PC-9 (cell line): ENCODE measurements at regions of chr9 and their contacts with region 1.

Region 1: DNA sequence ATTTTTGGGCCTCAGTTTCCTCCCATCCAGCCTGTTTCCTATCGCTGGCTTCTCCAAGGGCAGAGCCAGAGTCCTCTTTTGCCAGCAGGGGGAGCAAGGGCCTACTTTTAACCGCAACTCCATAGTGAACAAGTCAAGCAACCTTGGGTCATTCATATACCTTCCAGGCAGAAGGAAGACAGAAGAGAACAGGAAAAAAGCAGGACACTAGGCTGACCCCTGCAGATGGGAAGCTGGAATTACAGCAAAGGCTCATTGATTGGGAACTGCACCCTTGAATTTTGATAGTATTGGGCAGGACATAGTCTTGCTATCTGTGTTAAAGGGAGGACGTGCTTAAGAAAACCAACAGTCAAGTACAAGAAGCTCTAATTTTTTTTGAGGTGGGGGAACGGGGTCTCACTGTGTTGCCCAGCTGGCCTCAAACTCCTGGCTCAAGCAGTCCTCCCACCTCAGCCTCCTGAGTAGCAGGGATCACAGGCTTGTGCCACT is 30.1 kb downstream of the QRFP start:
- DNase-seq: peak; percentile 85 to 86
- H3K4me3 ChIP-seq: no peak overlapping the region
- H3K27ac ChIP-seq: no peak overlapping the region
- H3K4me1 ChIP-seq: no peaks in the 10 kb centered on the region
- H3K27me3 ChIP-seq: no peaks in the 10 kb centered on the region
- CTCF ChIP-seq: peak; percentile 96

Region 2: DNA sequence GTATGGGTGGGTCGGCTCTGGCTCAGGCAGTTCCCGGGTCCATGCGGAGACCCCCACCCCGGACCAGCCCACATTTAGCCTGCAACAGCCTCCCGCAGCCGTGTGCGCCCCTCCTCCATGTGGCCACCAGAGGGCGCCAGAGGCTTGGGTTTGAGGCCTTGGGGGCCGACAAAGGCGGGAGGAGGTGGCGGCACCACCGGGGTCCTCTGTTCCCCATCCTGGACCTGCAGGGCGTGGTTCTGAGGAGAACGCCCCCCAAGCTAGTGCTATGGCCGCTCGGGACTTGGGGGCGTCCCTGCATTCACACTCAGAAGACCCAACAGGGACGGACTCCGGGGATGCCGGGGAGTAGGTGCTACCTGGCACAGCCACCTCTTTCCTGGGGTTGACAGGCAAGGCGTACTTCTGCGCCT is 405.3 kb before region 1 on chr9:
- CTCF ChIA-PET with region 1: no interaction called
- POLR2A ChIA-PET with region 1: no interaction called
- intact Hi-C with region 1: loop called (anchors 5 kb)
- DNase-seq: peak in 1 of 2 experiments; percentile 55
- H3K4me3 ChIP-seq: no peak overlapping the region
- H3K27ac ChIP-seq: no peak overlapping the region
- H3K4me1 ChIP-seq: no peaks in the 10 kb centered on the region
- H3K27me3 ChIP-seq: no peaks in the 10 kb centered on the region
- CTCF ChIP-seq: peak; percentile 93

Region 3: DNA sequence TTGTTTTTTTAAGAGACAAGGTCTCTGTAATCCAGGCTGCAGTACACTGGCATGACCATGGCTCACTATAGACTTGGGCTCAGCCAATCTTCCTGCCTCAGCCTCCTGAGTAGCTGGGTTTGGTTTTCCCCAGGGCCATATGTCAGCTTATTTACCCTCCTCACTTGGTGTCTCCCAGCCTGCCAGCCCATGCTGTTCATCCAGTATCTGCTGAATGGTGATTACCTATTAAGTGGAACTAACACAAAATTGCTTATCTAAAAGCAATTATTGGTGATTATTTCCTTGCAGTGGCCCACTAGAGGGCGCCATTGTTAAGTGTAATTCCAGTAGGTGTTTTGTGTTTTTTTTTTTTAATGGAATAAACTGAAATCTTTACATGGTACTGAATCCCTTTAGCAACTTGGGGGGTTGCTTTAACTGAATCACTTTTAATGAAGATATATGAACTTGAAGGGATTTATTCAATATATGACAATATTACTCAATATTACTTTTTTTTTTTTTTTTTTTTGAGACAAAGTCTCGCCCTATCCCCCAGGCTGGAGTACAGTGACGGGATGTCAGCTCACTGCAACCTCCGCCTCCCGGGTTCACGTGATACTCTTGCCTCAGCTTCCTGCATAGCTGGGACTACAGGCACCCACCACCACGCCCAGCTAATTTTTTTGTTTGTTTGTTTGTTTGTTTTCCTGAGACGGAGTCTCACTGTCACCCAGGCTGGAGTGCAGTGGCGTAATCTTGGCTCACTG is 159.1 kb before region 1 on chr9:
- CTCF ChIA-PET with region 1: interaction called, 10 read pairs
- POLR2A ChIA-PET with region 1: no interaction called
- intact Hi-C with region 1: loop called (anchors 1 kb)
- DNase-seq: peak; percentile 59 to 61
- H3K4me3 ChIP-seq: no peak overlapping the region
- H3K27ac ChIP-seq: no peak overlapping the region
- H3K4me1 ChIP-seq: no peaks in the 10 kb centered on the region
- H3K27me3 ChIP-seq: no peaks in the 10 kb centered on the region
- CTCF ChIP-seq: peak; percentile 94

Region 4: DNA sequence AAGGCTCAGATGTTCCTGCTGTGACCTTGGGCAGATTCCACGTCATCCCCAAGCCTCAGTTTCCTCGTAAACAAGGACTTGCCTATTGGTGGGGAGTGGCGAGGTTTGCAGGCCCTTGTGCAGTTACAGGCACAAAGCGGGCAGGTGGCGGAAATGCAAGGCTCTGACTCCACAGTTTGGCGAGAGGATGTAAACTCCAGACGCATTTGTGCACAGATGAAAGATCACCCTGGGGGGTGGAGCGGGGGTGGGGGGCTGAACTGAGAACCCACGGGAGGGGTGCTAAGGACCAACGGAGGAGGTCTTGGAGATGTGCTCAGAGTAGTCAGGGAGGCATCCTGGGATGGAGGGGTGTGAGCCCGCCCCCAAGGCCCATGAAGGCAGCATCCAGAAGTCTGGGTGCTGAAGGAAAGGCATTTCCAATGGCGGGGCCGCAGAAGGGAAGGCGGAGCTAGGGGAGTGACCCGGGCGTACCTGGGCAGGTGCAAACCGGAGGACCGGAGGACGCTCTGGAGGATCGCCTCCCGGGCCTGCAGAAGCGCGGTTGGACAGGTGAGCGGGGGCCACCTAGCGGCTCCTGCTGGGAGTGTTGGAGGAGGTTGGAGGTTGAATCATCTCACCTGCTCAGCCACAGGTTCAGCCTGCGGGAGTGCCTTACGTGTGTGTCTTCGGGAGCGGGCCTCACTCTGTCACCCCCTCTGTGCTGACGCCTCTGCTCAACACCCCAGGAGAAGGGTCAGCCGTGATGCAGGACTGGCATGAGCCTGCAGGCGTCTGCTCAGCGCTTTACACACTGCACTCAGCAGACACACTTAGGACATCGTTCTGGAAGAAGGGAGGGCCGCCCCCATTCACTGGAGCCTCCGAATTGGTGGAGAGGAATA is 74.4 kb after region 1 on chr9:
- CTCF ChIA-PET with region 1: interaction called, 7 read pairs
- POLR2A ChIA-PET with region 1: no interaction called
- intact Hi-C with region 1: loop called (anchors 1 kb)
- DNase-seq: peak; percentile 85 to 96
- H3K4me3 ChIP-seq: no peak overlapping the region; the same call in 1 of the 2 replicates
- H3K27ac ChIP-seq: no peak overlapping the region
- H3K4me1 ChIP-seq: peaks cover 14% of the 10 kb centered on the region
- H3K27me3 ChIP-seq: peaks cover 17% of the 10 kb centered on the region; the same call in 1 of the 2 replicates
- CTCF ChIP-seq: peak; percentile 91

Region 5: GRCh38 chr9:131019388-131020239 is 153.1 kb after region 1 on chr9:
- CTCF ChIA-PET with region 1: interaction called, 13 read pairs
- POLR2A ChIA-PET with region 1: no interaction called
- intact Hi-C with region 1: no loop called
- DNase-seq: no peak
- H3K4me3 ChIP-seq: no peak overlapping the region
- H3K27ac ChIP-seq: no peak overlapping the region
- H3K4me1 ChIP-seq: no peaks in the 10 kb centered on the region
- H3K27me3 ChIP-seq: peaks cover 27% of the 10 kb centered on the region
- CTCF ChIP-seq: no peak